PC-9 (cell line): ENCODE measurements at regions of chrX and their contacts with region 1.

Region 1: GRCh38 chrX:123590842-123591491 is 141.9 kb downstream of the THOC2 start:
- DNase-seq: peak in 1 of 2 experiments; percentile 86
- H3K4me3 ChIP-seq: no peak overlapping the region
- H3K27ac ChIP-seq: no peak overlapping the region
- H3K4me1 ChIP-seq: peaks cover 15% of the 10 kb centered on the region
- H3K27me3 ChIP-seq: no peaks in the 10 kb centered on the region
- CTCF ChIP-seq: no peak

Region 2: DNA sequence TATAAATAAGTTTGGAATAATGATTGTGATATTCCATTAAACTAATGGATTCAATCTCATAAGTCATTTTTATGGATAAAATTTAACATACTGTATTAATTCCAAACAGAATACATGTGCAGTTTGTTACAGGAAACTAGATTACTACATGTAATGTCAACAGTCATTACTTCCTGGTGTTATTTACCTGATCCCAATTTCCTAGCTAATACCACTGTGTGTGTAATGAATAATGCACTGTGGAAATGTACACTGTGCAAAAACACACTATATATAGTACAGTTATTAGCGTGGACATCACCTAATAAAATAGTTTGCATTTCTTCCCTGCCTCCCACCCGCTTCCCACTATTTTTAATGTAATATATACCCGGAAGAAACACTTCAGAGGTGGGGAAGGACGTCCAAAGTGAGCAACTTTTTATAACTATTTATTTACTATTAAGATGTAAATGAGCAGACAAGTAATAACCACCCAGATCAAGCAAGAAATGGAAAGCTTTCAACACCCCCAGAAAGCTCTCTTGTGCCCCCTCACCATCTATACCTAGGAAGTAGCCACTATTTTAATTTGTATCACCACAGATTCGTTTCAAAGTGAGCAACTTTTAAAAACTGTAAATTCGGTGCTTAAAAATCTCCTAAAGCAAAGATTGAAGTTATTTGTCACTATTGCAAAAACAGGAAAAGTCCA is 77.2 kb before region 1 on chrX:
- CTCF ChIA-PET with region 1: interaction called, 3 read pairs
- POLR2A ChIA-PET with region 1: no interaction called
- intact Hi-C with region 1: loop called (anchors 10 kb)
- DNase-seq: no peak
- H3K4me3 ChIP-seq: peak overlapping the region; percentile 85
- H3K27ac ChIP-seq: no peak overlapping the region
- H3K4me1 ChIP-seq: peaks cover 6% of the 10 kb centered on the region; the same call in 1 of the 2 replicates
- H3K27me3 ChIP-seq: no peaks in the 10 kb centered on the region
- CTCF ChIP-seq: no peak